Activated CD8-positive, alpha-beta T cell treated with anti-CD3 and anti-CD28 coated beads for 36 hours (primary cell): ENCODE measurements at regions of chr12 and their contacts with region 1.

Region 1: DNA sequence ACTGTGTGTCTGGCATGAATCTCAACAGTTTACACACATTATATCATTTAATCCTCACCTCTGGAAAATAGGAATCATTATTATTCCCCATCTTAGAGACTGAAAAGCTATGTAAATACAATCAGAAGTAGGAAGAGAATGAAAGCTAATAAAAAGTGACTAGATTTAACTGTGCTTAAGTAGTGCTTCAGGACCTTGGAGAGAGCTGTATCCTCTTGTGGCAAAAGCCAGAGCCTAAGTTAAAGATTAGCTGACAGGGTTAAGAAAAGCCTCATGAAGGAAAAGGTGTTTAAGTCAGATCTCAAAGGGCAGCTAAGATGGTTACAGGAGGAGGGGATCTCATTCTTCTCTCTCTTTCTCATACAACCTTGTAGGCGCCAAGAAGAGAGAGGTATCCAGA is 65.3 kb upstream of the TMEM233 start:
- DNase-seq: no peak
- ATAC-seq: no peak
- H3K4me3 Mint-ChIP-seq: no peak overlapping the region
- H3K27ac Mint-ChIP-seq: no peak overlapping the region
- H3K4me1 Mint-ChIP-seq: no peaks in the 10 kb centered on the region
- H3K27me3 Mint-ChIP-seq: peaks cover 1% of the 10 kb centered on the region
- CTCF ChIP-seq: no peak

Region 2: DNA sequence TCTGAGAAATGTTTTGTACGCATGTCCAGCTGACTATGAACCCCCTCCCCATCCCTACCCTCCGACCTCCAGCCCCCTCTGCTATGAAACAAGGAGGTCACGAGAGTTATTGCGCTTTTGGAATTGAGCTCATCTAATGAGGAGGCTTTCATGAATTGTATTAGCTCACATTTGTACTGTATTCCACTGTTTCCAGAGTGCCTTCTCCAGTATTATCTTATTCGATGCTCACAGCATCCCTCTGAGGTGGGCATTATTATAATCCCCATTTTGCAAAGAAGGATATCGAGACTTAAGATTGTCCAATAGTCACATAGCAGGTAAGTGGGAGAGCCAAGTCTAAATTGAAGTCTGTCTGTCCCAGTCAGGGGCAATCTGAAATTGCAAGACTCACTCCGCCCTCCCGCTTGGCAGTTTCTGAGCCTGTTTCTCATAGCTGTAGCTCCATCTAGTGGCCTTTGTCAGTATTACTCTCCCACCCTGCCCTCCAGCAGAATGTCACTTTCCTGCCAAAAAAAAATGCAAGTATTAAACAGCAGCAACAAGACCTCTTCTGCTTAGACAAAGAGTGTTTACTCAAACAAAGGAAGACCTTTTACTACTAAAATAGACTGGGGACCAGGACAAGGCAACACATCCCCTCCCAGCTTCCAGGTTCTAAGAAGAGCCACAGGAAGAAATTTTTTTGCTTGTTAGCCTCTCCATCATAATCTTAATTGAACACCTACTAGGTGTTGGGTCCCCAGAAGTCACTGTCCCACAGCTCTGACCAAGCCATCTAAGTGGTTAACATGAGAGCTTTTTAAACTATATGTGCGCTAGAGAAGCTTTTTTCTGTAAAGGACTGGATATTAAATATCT is 16.8 kb after region 1 on chr12:
- CTCF ChIA-PET with region 1: interaction called, 10 read pairs
- POLR2A ChIA-PET with region 1: no interaction called
- intact Hi-C with region 1: no loop called
- DNase-seq: peak; percentile 69
- ATAC-seq: peak; percentile 68
- H3K4me3 Mint-ChIP-seq: no peak overlapping the region
- H3K27ac Mint-ChIP-seq: no peak overlapping the region
- H3K4me1 Mint-ChIP-seq: no peaks in the 10 kb centered on the region
- H3K27me3 Mint-ChIP-seq: peaks cover 24% of the 10 kb centered on the region
- CTCF ChIP-seq: peak; percentile 81

Region 3: DNA sequence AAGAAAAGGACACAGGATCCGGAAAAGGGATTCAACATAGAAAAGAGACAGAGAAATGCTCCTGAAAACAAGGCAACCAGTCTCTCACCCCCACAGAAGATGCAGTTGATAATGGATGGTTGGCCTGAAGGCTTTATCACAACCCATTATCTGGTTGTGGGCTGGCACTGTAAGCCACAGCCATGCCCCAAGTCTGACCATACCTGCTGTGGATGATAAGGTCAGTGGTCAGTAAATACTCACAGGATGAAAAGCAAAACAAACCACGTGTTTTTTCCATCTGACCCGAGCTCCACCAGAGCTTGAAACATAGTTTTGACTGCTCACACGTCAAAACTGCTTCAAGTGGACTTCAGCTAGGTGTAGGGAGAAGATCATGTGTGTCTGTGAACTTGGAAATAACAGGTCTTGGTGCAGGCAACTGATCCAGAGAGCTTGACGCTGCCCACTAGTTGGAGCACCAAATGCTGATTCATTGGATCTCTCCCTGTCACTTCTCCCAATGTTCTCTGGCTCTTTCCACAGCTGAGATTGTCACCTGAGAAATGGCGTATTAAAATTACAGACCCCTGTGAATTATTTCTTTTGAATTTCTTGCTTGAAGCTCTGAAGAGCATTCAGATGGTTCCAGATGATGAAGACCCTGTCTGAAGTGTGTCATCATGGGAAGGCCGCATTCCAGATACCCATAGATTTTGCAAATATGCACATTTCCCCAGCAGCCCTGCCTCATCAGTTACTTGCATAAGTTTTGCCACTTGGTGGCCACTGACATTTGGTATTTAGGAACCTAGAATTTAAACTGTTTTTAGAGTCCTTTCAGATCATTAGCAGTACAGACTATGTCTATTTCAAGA is 73.9 kb after region 1 on chr12:
- CTCF ChIA-PET with region 1: no interaction called
- POLR2A ChIA-PET with region 1: no interaction called
- intact Hi-C with region 1: no loop called
- DNase-seq: no peak
- ATAC-seq: no peak
- H3K4me3 Mint-ChIP-seq: no peak overlapping the region
- H3K27ac Mint-ChIP-seq: no peak overlapping the region
- H3K4me1 Mint-ChIP-seq: no peaks in the 10 kb centered on the region
- H3K27me3 Mint-ChIP-seq: peaks cover 32% of the 10 kb centered on the region
- CTCF ChIP-seq: no peak